HEK293 (cell line): ENCODE measurements at regions of chr12 and their contacts with region 1.

Region 1: DNA sequence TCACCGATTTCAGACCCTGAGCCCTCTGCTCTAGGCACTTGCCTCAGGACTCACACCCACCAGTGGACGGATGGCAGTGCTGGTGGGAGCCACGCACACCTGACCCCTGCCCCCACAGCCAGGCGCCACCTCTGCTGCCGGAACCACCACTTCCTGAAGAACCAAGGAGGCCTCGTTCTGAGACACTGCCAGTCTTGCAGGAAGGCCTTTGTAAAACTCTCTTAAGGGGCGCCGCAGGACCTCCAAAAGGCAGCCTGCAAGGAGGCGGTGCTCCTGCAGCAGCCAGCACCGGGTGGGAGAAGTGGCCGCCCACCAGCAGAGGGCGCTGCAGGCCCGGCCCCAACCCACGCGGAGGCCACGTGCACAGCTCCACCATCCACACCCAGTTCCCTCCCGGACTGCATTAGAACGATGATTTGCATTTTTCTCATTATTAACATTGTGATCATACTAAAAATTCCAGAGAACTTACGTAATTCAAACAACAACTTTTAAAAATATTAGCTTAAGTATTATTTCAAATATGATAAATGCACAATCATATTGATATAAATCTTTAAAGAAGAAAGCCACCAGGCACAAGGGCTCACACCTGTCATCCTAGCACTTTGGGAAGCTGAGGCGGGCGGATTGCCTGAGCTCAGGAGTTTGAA is 12.8 kb downstream of the STX2 start:
- H3K4me3 ChIP-seq: no peak overlapping the region
- H3K27ac ChIP-seq: no peak overlapping the region
- H3K4me1 ChIP-seq: no peaks in the 10 kb centered on the region
- CTCF ChIP-seq: 0 out of 2 replicates have a peak, but pooled peaks have one; percentile 23

Region 2: GRCh38 chr12:130838951-130839769 is 12.9 kb after region 1 on chr12 and contains the start of gene STX2:
- CTCF ChIA-PET with region 1: interaction called, 30 read pairs
- POLR2A ChIA-PET with region 1: no interaction called
- H3K4me3 ChIP-seq: peak within 1 kb of the TSS; percentile 54
- H3K27ac ChIP-seq: no peak within 1 kb of the TSS
- H3K4me1 ChIP-seq: peaks cover 4% of the 10 kb centered on the region
- CTCF ChIP-seq: peak; percentile 86

Region 3: GRCh38 chr12:131218026-131218922 is 392.0 kb after region 1 on chr12:
- CTCF ChIA-PET with region 1: no interaction called
- POLR2A ChIA-PET with region 1: no interaction called
- H3K4me3 ChIP-seq: no peak overlapping the region
- H3K27ac ChIP-seq: no peak overlapping the region
- H3K4me1 ChIP-seq: no peaks in the 10 kb centered on the region
- CTCF ChIP-seq: no peak